HepG2 (cell line): ENCODE measurements at regions of chr19 and their contacts with region 1.

Region 1: DNA sequence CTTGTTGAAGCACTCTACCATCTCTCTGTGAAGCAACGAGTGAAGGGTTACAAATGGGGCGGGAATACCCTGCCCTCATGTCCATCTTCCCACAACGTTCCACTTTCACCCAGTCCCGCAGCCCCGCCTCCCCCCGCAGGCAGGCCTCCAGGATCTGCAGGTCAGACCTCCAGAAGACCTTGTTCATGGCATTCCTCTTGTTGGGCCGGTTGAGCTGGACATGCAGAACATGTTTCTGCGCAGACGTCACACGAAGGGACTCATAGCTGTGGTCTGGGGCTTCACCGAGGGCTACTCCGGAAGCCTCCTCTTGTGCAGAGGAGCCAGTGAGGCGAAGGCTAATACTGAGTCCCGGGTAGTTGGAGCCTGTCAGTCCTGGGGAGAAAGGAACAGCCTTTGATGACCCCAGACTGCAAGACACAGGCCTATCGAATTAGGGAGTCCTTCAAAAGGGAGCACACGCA is 420 bp downstream of the ECH1 start:
- DNase-seq: peak; percentile 87
- ATAC-seq: peak; percentile 75
- H3K4me3 ChIP-seq: peak overlapping the region; percentile 49 to 80 (median 62)
- H3K27ac ChIP-seq: peak overlapping the region; percentile 97
- H3K4me1 ChIP-seq: peaks cover 46% of the 10 kb centered on the region
- H3K27me3 ChIP-seq: no peaks in the 10 kb centered on the region; a peak in 1 of 5 replicates
- CTCF ChIP-seq: peak; percentile 17; the same call in 1 of the 2 replicates
- EP300 ChIP-seq: 0 out of 4 replicates have a peak, but pooled peaks have one; percentile 2 to 43
- POLR2A ChIP-seq: peak in 1 of 2 experiments; percentile 69; a peak in 1 of 4 replicates
- RAD21 ChIP-seq: no peak; the same call in 1 of the 2 replicates

Region 2: GRCh38 chr19:38658462-38659306 is 172.5 kb before region 1 on chr19:
- CTCF ChIA-PET with region 1: no interaction called
- POLR2A ChIA-PET with region 1: interaction called, 4 read pairs
- in situ Hi-C with region 1: no loop called
- intact Hi-C with region 1: loop called (anchors 10 kb)
- DNase-seq: peak; percentile 95
- ATAC-seq: peak; percentile 80
- H3K4me3 ChIP-seq: no peak overlapping the region; a peak in 1 of 6 replicates
- H3K27ac ChIP-seq: peak overlapping the region; percentile 69
- H3K4me1 ChIP-seq: peaks cover 98% of the 10 kb centered on the region
- H3K27me3 ChIP-seq: no peaks in the 10 kb centered on the region
- CTCF ChIP-seq: no peak
- EP300 ChIP-seq: peak; percentile 36 to 62; a peak in 1 of 4 replicates
- POLR2A ChIP-seq: peak in 1 of 2 experiments; percentile 51; a peak in 2 of 4 replicates
- RAD21 ChIP-seq: no peak

Region 3: GRCh38 chr19:38739440-38740256 is 91.5 kb before region 1 on chr19:
- CTCF ChIA-PET with region 1: no interaction called
- POLR2A ChIA-PET with region 1: interaction called, 10 read pairs
- in situ Hi-C with region 1: loop called (anchors 5 kb)
- intact Hi-C with region 1: loop called (anchors 5 kb)
- DNase-seq: no peak
- ATAC-seq: no peak
- H3K4me3 ChIP-seq: no peak overlapping the region
- H3K27ac ChIP-seq: no peak overlapping the region
- H3K4me1 ChIP-seq: peaks cover 59% of the 10 kb centered on the region
- H3K27me3 ChIP-seq: no peaks in the 10 kb centered on the region
- CTCF ChIP-seq: no peak
- EP300 ChIP-seq: no peak
- POLR2A ChIP-seq: no peak
- RAD21 ChIP-seq: no peak

Region 4: DNA sequence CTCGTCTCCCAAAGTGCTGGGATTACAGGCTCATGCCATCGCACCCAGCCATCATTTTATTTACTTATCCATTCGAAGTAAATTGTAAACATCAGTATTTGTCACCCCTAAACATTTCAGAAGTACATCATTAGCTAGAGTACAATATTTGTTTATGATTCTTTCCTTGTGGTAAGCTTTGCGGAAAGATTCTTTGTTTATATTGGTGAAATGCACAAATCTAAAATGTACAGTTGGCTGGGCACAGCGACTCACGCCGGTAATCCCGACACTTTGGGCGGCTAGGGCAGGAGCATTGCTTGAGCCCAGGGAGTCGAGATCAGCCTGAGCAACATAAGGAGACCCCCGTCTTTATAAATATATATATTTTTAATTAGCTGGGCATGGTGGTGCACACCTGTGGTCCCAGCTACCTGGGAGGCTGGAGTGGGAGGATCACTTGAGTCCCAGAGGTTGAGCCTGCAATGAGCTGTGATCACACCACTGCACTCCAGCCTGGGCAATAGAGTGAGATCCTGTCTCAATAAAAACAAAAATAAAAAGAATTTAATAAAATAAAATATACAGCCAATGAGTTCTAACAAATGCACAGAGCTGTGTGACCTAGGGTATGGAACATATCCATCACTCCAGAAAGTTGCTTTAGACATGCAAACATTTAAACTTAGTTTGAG is 32.0 kb before region 1 on chr19:
- CTCF ChIA-PET with region 1: no interaction called
- POLR2A ChIA-PET with region 1: interaction called, 10 read pairs
- in situ Hi-C with region 1: no loop called
- intact Hi-C with region 1: no loop called
- DNase-seq: no peak
- ATAC-seq: no peak
- H3K4me3 ChIP-seq: no peak overlapping the region
- H3K27ac ChIP-seq: no peak overlapping the region
- H3K4me1 ChIP-seq: 0 out of 2 replicates have a peak, but pooled peaks cover 6% of the 10 kb centered on the region
- H3K27me3 ChIP-seq: no peaks in the 10 kb centered on the region
- CTCF ChIP-seq: no peak
- EP300 ChIP-seq: no peak
- POLR2A ChIP-seq: no peak
- RAD21 ChIP-seq: no peak

Region 5: DNA sequence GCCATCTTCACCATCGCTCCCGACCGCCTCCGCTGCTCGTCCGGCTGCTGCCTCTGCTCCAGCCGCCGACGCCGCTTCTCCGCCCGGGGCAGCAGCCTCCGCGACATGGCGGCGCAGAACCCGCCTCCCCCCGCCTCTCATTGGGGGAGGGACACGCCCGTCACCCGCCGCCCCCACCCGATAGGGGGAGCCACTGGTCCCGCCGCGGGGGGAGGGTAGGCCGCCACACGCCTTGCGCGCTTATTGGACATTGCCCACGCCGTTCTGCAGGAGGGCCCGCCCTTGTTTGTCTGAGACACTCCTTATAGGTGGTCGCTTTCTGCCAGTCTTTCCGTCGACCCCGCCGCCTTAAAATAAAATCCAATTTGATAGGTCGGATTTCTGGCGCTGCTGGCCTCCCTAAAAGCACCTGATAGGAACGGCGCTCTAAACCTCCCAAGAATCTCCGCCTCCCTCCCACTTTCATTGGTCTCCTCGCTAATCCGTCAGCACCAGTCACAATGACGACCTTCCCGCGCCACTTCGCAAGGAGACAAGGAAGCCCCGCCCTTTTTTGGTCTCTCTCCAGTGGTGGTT is 18.8 kb after region 1 on chr19 and contains the start of gene HNRNPL:
- CTCF ChIA-PET with region 1: no interaction called
- POLR2A ChIA-PET with region 1: interaction called, 148 read pairs
- in situ Hi-C with region 1: no loop called
- intact Hi-C with region 1: loop called (anchors 2 kb)
- DNase-seq: peak; percentile 100
- ATAC-seq: peak; percentile 75
- H3K4me3 ChIP-seq: peak within 1 kb of the TSS; percentile 67 to 87 (median 72)
- H3K27ac ChIP-seq: peak within 1 kb of the TSS; percentile 96
- H3K4me1 ChIP-seq: peaks cover 64% of the 10 kb centered on the region
- H3K27me3 ChIP-seq: no peaks in the 10 kb centered on the region; a peak in 1 of 5 replicates
- CTCF ChIP-seq: peak; percentile 69
- EP300 ChIP-seq: no peak
- POLR2A ChIP-seq: peak; percentile 67 to 80; a peak in 3 of 4 replicates
- RAD21 ChIP-seq: peak; percentile 3; the same call in 1 of the 2 replicates
- total RNA-seq, gene HNRNPL: 270 and 278 TPM in 2 replicates

Region 6: DNA sequence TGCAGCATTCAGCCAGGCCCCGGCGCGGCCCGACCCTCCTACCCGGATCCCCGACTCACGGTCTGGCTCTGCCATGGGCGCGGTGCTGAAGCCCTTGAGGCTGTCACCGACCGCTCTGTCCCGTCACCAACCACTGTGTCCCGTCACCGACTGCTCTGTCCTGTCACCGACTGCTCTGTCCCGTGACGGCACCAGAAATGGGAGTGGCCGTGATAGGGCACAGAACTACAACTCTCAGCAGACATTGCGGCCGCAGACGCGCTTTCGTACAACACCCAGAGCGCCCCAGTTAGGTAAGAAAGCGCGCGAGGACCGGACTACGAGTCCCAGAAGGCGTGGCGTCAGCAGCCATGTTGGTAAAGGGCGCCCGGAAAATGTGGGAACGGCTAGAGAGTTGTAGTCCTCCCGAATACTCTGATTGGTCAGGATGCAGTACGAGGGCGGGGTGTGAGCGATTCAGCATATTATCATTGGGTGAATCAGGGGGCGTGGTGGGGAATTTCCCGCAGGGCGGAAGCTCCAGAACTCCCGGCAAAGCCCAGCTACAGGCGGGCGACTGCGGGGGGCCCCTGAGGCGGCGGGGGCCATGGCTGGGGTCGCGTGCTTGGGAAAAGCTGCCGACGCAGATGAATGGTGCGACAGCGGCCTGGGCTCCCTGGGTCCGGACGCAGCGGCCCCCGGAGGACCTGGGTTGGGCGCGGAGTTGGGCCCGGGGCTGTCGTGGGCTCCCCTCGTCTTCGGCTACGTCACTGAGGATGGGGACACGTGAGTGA is 68.5 kb after region 1 on chr19 and contains the starts of genes NFKBIB and SIRT2:
- CTCF ChIA-PET with region 1: no interaction called
- POLR2A ChIA-PET with region 1: interaction called, 21 read pairs
- in situ Hi-C with region 1: no loop called
- intact Hi-C with region 1: no loop called
- DNase-seq: peak; percentile 99
- ATAC-seq: peak; percentile 95
- H3K4me3 ChIP-seq: peak within 1 kb of the TSS; percentile 73 to 87 (median 83)
- H3K27ac ChIP-seq: peak within 1 kb of the TSS; percentile 73
- H3K4me1 ChIP-seq: peaks cover 34% of the 10 kb centered on the region
- H3K27me3 ChIP-seq: no peaks in the 10 kb centered on the region; a peak in 1 of 5 replicates
- CTCF ChIP-seq: peak; percentile 42
- EP300 ChIP-seq: peak in 1 of 2 experiments; percentile 4; a peak in 1 of 4 replicates
- POLR2A ChIP-seq: peak in 1 of 2 experiments; percentile 59; a peak in 2 of 4 replicates
- RAD21 ChIP-seq: peak; percentile 15; the same call in 1 of the 2 replicates
- total RNA-seq, gene NFKBIB: 13.8 and 14.9 TPM in 2 replicates
- total RNA-seq, gene SIRT2: 20.3 and 22.3 TPM in 2 replicates

Region 7: DNA sequence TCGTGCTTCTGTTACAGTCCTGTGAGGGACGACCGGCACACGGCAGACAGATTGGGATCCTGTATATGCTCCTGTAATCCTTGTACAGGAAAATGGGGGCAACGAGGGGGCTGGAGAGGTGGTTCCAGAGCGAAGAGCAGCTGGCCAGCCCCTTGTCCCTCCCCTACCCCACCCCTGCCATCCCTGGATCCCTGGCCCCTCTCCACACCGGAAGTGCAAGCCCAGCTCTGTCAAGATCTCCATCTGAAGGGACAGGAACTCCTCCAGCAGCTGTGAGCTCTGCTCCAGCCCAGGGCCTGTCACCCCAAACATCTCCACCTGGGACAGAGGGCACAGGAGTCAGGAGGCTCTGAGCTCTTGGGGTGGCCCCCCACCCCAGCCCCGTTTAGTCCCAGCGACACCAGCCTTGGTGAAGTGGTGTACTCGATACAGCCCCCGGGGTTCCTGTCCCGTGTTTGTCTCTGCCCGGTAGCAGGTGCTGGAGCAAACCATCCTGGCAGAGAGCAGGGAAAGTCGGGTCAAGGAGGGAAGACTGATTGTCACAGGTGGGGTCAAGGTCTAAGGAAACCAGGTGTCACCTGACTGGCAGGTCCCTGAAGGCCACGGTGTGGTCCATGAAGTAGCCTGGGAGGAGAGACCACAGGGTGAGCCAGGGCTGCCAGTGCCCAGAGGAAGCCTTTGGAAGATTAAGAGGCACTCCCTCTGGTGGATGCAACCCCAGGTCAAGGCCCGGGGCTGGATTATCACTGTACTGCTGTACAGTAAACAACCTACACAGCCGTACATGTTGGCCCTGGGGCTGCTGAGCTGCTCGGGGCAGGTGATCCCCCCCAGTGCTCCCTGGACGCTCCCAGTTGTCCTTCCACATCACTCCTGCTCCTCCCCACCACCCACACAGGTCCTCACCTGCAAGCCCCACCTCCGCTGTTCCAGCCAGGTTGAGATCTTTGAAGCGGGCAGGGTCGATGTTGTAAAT is 86.6 kb after region 1 on chr19:
- CTCF ChIA-PET with region 1: no interaction called
- POLR2A ChIA-PET with region 1: no interaction called
- in situ Hi-C with region 1: no loop called
- intact Hi-C with region 1: no loop called
- DNase-seq: peak; percentile 62
- ATAC-seq: peak; percentile 92
- H3K4me3 ChIP-seq: no peak overlapping the region
- H3K27ac ChIP-seq: no peak overlapping the region
- H3K4me1 ChIP-seq: peaks cover 12% of the 10 kb centered on the region
- H3K27me3 ChIP-seq: no peaks in the 10 kb centered on the region
- CTCF ChIP-seq: peak; percentile 78
- EP300 ChIP-seq: no peak
- POLR2A ChIP-seq: no peak
- RAD21 ChIP-seq: peak; percentile 35; the same call in 1 of the 2 replicates

Region 8: GRCh38 chr19:38974624-38975213 is 143.5 kb after region 1 on chr19:
- CTCF ChIA-PET with region 1: no interaction called
- POLR2A ChIA-PET with region 1: no interaction called
- in situ Hi-C with region 1: no loop called
- intact Hi-C with region 1: no loop called
- DNase-seq: no peak
- ATAC-seq: no peak
- H3K4me3 ChIP-seq: peak overlapping the region; percentile 67 to 81 (median 80)
- H3K27ac ChIP-seq: peak overlapping the region; percentile 99
- H3K4me1 ChIP-seq: peaks cover 54% of the 10 kb centered on the region
- H3K27me3 ChIP-seq: no peaks in the 10 kb centered on the region
- CTCF ChIP-seq: no peak
- EP300 ChIP-seq: no peak
- POLR2A ChIP-seq: no peak
- RAD21 ChIP-seq: no peak